Activated B cell treated with CpG ODN at 0.5 μM for 24 hours (primary cell): ENCODE measurements at regions of chr17 and their contacts with region 1.

Region 1: DNA sequence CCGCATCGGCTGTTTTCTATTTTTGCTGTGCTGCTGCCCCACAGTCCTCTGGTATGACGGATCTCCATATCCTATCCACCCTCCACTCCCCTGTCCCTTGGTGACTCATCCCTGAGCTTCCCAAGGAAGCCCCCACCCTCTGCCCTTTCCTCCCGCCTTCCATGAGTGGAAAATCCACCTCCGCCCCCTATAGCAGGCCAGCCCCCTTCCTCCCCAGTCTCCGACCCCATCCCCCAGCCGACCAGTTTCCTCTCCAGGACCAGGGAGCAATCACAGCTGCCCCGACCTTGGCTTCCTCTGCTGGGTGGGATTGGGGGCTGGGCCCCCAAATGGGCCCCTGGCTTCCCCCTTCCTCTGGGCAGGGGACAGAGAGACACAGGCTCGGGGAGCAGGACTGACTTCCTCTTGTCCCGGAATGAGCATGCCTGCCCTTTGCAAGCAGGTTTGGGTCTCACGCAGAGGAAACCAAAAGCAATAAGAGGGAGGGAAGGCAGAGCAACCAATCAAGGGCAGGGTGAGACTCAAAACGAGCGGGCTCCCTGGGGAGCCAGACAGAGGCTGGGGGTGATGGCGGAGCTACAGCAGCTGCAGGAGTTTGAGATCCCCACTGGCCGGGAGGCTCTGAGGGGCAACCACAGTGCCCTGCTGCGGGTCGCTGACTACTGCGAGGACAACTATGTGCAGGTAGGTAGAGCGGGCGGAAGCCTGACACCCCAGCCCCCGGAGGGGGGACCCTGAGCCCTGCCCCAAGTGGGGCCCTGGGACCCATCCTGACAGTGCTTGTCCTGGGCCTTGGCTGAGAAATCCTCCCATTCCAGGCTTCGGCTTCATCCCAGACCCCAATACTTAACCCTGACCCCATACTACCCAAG is at the starts of genes ABI3 and GNGT2:
- DNase-seq: peak; percentile 64
- ATAC-seq: peak; percentile 96
- H3K4me3 Mint-ChIP-seq: peak within 1 kb of the TSS; percentile 84
- H3K27ac Mint-ChIP-seq: peak within 1 kb of the TSS; percentile 87
- H3K4me1 Mint-ChIP-seq: peaks cover 64% of the 10 kb centered on the region
- H3K27me3 Mint-ChIP-seq: no peaks in the 10 kb centered on the region
- CTCF ChIP-seq: no peak
- total RNA-seq, gene ABI3: 6.5 and 9.7 TPM in 2 replicates
- total RNA-seq, gene GNGT2: 8.1 and 9.8 TPM in 2 replicates

Region 2: GRCh38 chr17:48830840-48831548 is 379.4 kb before region 1 on chr17 and contains the start of gene CALCOCO2:
- CTCF ChIA-PET with region 1: no interaction called
- POLR2A ChIA-PET with region 1: no interaction called
- intact Hi-C with region 1: loop called (anchors 10 kb)
- DNase-seq: peak; percentile 82
- ATAC-seq: peak; percentile 96
- H3K4me3 Mint-ChIP-seq: peak within 1 kb of the TSS; percentile 99
- H3K27ac Mint-ChIP-seq: peak within 1 kb of the TSS; percentile 99
- H3K4me1 Mint-ChIP-seq: peaks cover 42% of the 10 kb centered on the region
- H3K27me3 Mint-ChIP-seq: no peaks in the 10 kb centered on the region
- CTCF ChIP-seq: no peak
- total RNA-seq, gene CALCOCO2: 115 TPM in 2 replicates

Region 3: DNA sequence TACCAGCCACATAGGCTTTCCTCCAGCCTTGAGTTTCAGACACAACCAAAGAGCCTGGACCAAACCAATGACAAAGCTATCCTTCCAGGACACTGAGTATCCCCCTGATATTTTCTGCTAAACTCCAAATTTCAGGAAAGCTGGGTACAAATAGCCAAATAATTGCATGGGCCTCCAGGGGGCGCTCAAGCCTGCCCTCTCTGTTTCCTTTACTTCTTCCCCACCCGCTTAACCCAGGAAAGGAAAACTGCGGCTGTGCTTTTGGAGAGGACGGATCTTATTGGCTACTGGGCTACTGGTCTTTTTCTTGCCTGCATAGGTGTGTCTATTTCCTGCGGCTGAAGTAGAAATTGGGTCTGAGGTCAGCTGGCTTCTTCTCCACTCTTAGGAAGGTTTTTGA is 30.1 kb before region 1 on chr17:
- CTCF ChIA-PET with region 1: interaction called, 6 read pairs
- POLR2A ChIA-PET with region 1: no interaction called
- intact Hi-C with region 1: loop called (anchors 1 kb)
- DNase-seq: peak; percentile 58
- ATAC-seq: peak; percentile 52
- H3K4me3 Mint-ChIP-seq: no peak overlapping the region
- H3K27ac Mint-ChIP-seq: no peak overlapping the region
- H3K4me1 Mint-ChIP-seq: peaks cover 4% of the 10 kb centered on the region
- H3K27me3 Mint-ChIP-seq: peaks cover 1% of the 10 kb centered on the region
- CTCF ChIP-seq: peak; percentile 54

Region 4: GRCh38 chr17:49197346-49197998 is 12.9 kb before region 1 on chr17:
- CTCF ChIA-PET with region 1: interaction called, 41 read pairs
- POLR2A ChIA-PET with region 1: interaction called, 259 read pairs
- intact Hi-C with region 1: loop called (anchors 1 kb)
- DNase-seq: no peak
- ATAC-seq: no peak
- H3K4me3 Mint-ChIP-seq: no peak overlapping the region
- H3K27ac Mint-ChIP-seq: no peak overlapping the region
- H3K4me1 Mint-ChIP-seq: peaks cover 32% of the 10 kb centered on the region
- H3K27me3 Mint-ChIP-seq: peaks cover 2% of the 10 kb centered on the region
- CTCF ChIP-seq: no peak

Region 5: DNA sequence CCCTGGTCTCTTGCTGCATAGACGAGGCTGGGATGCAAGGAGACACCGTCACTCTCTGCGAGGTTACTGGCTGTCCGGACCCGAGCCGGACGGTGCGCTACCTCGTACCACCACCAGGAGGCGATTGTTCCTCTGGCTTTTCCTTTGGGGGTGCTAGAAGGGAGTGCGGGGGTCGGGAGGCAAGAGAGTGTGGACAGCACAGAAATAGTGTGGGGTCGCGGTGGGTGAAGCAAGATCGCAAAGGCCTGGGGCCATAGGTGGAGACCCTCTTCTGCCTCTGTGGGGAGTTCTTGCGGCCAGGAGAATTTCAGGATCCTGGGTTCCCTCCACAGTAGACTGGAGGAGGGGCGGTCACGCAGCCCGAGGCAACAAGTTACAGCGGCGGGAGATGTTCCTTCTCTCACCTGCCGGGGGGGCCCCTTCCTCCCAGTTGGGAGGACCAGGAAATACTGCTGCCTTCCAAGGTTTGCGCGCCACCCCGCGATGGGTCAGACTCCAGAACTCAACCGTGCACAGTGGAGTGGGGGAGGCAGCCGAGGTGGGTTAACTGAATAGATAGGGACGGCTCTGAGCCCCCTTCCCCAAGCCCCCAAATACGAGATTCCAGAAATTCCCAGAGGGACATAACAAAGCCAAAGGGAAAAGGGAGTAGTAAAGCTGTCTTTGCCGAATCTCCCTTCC is 13.3 kb after region 1 on chr17:
- CTCF ChIA-PET with region 1: interaction called, 6 read pairs
- POLR2A ChIA-PET with region 1: interaction called, 12 read pairs
- intact Hi-C with region 1: loop called (anchors 1 kb)
- DNase-seq: peak; percentile 67
- ATAC-seq: peak; percentile 23
- H3K4me3 Mint-ChIP-seq: peak overlapping the region; percentile 79
- H3K27ac Mint-ChIP-seq: peak overlapping the region; percentile 41
- H3K4me1 Mint-ChIP-seq: peaks cover 42% of the 10 kb centered on the region
- H3K27me3 Mint-ChIP-seq: peaks cover 6% of the 10 kb centered on the region
- CTCF ChIP-seq: no peak

Region 6: GRCh38 chr17:49285716-49286115 is 75.3 kb after region 1 on chr17:
- CTCF ChIA-PET with region 1: no interaction called
- POLR2A ChIA-PET with region 1: no interaction called
- intact Hi-C with region 1: no loop called
- DNase-seq: no peak
- ATAC-seq: no peak
- H3K4me3 Mint-ChIP-seq: no peak overlapping the region
- H3K27ac Mint-ChIP-seq: no peak overlapping the region
- H3K4me1 Mint-ChIP-seq: no peaks in the 10 kb centered on the region
- H3K27me3 Mint-ChIP-seq: peaks cover 2% of the 10 kb centered on the region
- CTCF ChIP-seq: no peak